OCI-LY7 (cell line): ENCODE measurements at regions of chr9 and their contacts with region 1.

Region 1: GRCh38 chr9:109817846-109818472 is 38.0 kb downstream of the PALM2AKAP2 start:
- DNase-seq: peak; percentile 76
- H3K4me3 ChIP-seq: no peak overlapping the region
- H3K27ac ChIP-seq: no peak overlapping the region
- H3K4me1 ChIP-seq: no peaks in the 10 kb centered on the region
- CTCF ChIP-seq: peak; percentile 97

Region 2: DNA sequence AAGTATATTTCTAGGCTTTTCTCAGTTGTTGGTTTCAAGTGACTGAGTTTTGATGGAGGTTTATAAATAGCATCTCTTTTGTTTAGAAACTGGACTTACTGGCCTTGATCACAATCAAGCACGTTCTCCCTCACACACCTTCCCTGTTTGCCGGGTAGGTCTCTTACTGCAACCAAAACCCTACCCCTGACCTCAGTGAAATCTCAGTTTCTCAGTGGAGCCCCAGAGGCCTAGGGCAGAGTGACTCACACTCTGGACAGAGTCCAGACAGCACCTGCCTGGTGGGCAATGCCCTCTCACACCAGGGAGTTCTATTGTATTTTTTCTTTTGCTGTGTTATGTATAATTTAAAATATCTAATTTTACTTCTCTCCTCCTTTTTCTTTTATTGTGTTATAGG is 448.7 kb before region 1 on chr9:
- CTCF ChIA-PET with region 1: no interaction called
- POLR2A ChIA-PET with region 1: no interaction called
- intact Hi-C with region 1: no loop called
- DNase-seq: no peak
- H3K4me3 ChIP-seq: no peak overlapping the region
- H3K27ac ChIP-seq: no peak overlapping the region
- H3K4me1 ChIP-seq: no peaks in the 10 kb centered on the region
- CTCF ChIP-seq: no peak

Region 3: GRCh38 chr9:109574068-109574882 is 243.7 kb before region 1 on chr9:
- CTCF ChIA-PET with region 1: no interaction called
- POLR2A ChIA-PET with region 1: no interaction called
- intact Hi-C with region 1: loop called (anchors 2 kb)
- DNase-seq: peak; percentile 61
- H3K4me3 ChIP-seq: no peak overlapping the region
- H3K27ac ChIP-seq: no peak overlapping the region
- H3K4me1 ChIP-seq: no peaks in the 10 kb centered on the region
- CTCF ChIP-seq: peak; percentile 86

Region 4: GRCh38 chr9:109726119-109726518 is 91.8 kb before region 1 on chr9:
- CTCF ChIA-PET with region 1: no interaction called
- POLR2A ChIA-PET with region 1: interaction called, 4 read pairs
- intact Hi-C with region 1: loop called (anchors 5 kb)
- DNase-seq: no peak
- H3K4me3 ChIP-seq: no peak overlapping the region
- H3K27ac ChIP-seq: no peak overlapping the region
- H3K4me1 ChIP-seq: no peaks in the 10 kb centered on the region
- CTCF ChIP-seq: no peak